Posterior vena cava (tissue), 2 donors: ENCODE measurements at regions of chr7 and their contacts with region 1.

Region 1: DNA sequence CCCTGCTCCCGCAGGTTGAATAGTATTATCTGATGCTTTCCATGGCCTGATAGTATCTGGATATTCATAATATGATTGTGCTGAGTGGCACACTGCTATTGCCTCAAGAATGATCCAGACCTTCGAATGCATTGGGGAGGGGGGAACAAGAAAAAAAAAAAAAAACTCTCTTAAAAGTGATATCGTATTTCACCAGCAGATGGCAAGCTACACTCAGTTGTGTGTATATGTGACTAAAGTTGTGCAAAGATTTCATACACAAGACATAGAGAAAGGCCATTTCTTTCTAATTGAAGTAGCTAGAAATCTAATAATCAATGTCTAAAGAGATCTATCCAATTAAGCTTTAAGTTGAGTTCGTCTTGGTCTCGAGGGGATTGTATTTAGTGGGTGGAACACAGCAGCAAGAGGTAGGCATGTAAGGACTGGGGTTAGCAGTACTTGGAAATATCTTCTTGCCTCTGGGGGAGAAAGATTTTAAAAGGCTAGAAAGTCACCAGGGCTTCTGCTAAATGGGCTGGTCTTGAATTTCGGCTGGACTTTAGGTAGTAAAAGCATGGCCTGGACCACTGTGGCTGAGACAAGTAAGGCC is 15.3 kb downstream of the SFRP4 start:
- DNase-seq: no peak

Region 2: GRCh38 chr7:38222481-38223096 is 321.3 kb after region 1 on chr7:
- intact Hi-C with region 1: loop called in 1 of 2 experiments (anchors 10 kb)
- DNase-seq: no peak